CD8-positive, alpha-beta memory T cell (primary cell): ENCODE measurements at regions of chr22 and their contacts with region 1.

Region 1: GRCh38 chr22:36325154-36326031 is 62.4 kb downstream of the MYH9 start:
- DNase-seq: no peak
- H3K4me3 ChIP-seq: no peak overlapping the region
- H3K4me3 Mint-ChIP-seq: peak overlapping the region in 2 of 7 donors; percentile 20 to 54
- H3K27ac ChIP-seq: no peak overlapping the region
- H3K27ac Mint-ChIP-seq: peak overlapping the region in 7 of 8 donors; percentile 47 to 94 (median 75)
- H3K4me1 ChIP-seq: peaks cover 29% of the 10 kb centered on the region
- H3K4me1 Mint-ChIP-seq: peaks cover 44 to 45% (median 44%) of the 10 kb centered on the region in 3 donors
- H3K27me3 ChIP-seq: no peaks in the 10 kb centered on the region
- H3K27me3 Mint-ChIP-seq: no peaks in the 10 kb centered on the region

Region 2: GRCh38 chr22:36144886-36145541 is 180.4 kb before region 1 on chr22:
- CTCF ChIA-PET with region 1: no interaction called
- POLR2A ChIA-PET with region 1: interaction called, 11 read pairs
- DNase-seq: peak in 2 of 5 donors; percentile 26 to 46
- H3K4me3 ChIP-seq: no peak overlapping the region
- H3K4me3 Mint-ChIP-seq: no peak overlapping the region
- H3K27ac ChIP-seq: no peak overlapping the region
- H3K27ac Mint-ChIP-seq: peak overlapping the region; percentile 14 to 98 (median 84)
- H3K4me1 ChIP-seq: peaks cover 7% of the 10 kb centered on the region
- H3K4me1 Mint-ChIP-seq: peaks cover 43 to 62% (median 45%) of the 10 kb centered on the region in 3 donors
- H3K27me3 ChIP-seq: no peaks in the 10 kb centered on the region
- H3K27me3 Mint-ChIP-seq: no peaks in the 10 kb centered on the region